B cell (primary cell): ENCODE measurements at regions of chr16 and their contacts with region 1.

Region 1: DNA sequence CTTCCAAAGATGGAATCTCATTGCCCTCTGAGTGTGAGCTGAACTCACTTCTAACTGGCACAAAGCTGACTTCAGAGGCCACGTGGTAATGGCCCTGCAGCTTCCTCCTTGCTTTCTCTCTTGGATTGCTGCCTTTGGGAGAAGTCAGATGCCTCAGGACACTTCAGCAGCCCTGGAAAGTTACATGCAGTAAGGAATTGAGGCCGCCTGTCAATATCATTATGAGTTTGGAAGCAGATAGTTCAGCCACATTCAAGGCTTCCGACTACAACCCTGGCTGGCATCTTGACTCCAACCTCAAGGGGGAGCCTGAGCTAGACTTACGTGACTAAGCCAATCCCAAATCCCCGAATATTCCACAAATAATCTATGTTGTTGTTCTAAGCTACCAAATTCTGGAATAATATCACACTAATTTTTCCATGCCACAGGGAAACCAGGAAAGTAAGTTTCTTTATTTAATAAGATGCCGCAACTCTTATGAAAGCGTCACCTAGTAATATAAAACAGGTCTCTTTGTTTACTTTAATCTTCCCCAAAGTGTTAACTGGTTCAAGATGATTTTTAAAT is 13.6 kb downstream of the CEP20 start:
- DNase-seq: peak; percentile 37
- ATAC-seq: no peak
- H3K4me3 ChIP-seq: no peak overlapping the region
- H3K4me3 Mint-ChIP-seq: no peak overlapping the region
- H3K27ac ChIP-seq: no peak overlapping the region
- H3K27ac Mint-ChIP-seq: no peak overlapping the region
- H3K4me1 ChIP-seq: no peaks in the 10 kb centered on the region
- H3K4me1 Mint-ChIP-seq: no peaks in the 10 kb centered on the region
- H3K27me3 ChIP-seq: no peaks in the 10 kb centered on the region
- H3K27me3 Mint-ChIP-seq: no peaks in the 10 kb centered on the region
- CTCF ChIP-seq: peak; percentile 43

Region 2: DNA sequence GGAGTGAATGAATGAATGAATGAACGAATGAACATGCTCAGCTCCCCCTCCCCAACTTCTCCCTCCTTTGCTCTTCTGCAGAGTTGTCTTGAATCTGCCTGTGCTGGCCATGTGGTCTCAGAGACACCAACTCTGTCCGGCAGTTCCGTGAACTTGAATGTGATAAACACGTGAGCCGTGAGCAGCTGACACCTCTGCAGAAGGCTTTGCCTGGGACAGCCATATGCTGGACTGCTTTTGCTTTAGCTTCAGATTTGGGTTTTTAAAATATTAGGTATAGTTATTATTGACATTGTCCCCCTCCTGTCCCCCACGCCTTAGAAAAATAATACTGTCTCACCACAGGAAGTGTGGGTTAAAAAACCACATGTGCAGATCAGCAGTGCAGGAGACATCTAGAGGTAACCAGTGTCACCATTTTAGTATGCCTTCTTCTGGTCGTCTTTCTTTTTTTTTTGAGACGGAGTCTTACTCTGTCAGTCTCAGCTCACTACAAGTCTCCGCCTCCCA is 158.4 kb after region 1 on chr16:
- CTCF ChIA-PET with region 1: interaction called, 15 read pairs
- POLR2A ChIA-PET with region 1: no interaction called
- intact Hi-C with region 1: no loop called
- DNase-seq: peak; percentile 38
- ATAC-seq: peak; percentile 68
- H3K4me3 ChIP-seq: no peak overlapping the region
- H3K4me3 Mint-ChIP-seq: no peak overlapping the region
- H3K27ac ChIP-seq: peak overlapping the region in 1 of 2 donors; percentile 41
- H3K27ac Mint-ChIP-seq: peak overlapping the region; percentile 28
- H3K4me1 ChIP-seq: peaks cover 7 to 13% of the 10 kb centered on the region in 2 donors
- H3K4me1 Mint-ChIP-seq: peaks cover 17% of the 10 kb centered on the region
- H3K27me3 ChIP-seq: no peaks in the 10 kb centered on the region
- H3K27me3 Mint-ChIP-seq: no peaks in the 10 kb centered on the region
- CTCF ChIP-seq: no peak

Region 3: DNA sequence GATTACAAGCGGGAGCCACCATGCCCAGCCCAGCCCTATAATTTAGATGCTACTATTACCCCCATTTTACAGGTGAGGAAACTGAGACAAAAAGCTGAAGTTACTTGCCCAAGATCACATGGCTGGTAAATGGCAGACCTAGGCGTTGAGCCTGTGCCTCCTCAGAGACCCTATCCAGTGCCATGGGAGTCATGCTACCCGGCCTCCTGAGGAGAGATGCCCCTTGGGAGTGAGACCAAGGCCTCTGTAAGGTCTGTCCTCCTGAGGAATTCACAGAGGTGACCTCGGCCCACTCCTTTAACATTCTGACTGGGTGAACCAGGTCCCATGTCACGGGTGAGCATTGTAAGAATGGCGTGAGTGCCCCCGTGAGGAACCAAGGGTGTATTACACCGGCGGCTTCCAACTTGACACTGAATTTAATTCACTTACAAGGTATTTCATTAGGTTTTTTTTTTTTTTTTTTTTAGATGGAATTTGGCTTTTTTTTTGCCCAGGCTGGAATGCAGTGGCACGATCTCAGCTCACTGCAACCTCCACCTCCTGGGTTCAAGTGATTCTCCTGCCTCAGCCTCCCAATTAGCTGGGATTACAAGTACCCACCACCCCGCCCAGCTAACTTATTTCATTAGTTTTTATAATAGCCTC is 252.8 kb after region 1 on chr16:
- CTCF ChIA-PET with region 1: interaction called, 30 read pairs
- POLR2A ChIA-PET with region 1: no interaction called
- intact Hi-C with region 1: loop called (anchors 1 kb)
- DNase-seq: peak; percentile 75
- ATAC-seq: peak; percentile 92
- H3K4me3 ChIP-seq: no peak overlapping the region
- H3K4me3 Mint-ChIP-seq: no peak overlapping the region
- H3K27ac ChIP-seq: no peak overlapping the region
- H3K27ac Mint-ChIP-seq: peak overlapping the region; percentile 46
- H3K4me1 ChIP-seq: peaks cover 0 to 3% of the 10 kb centered on the region in 2 donors
- H3K4me1 Mint-ChIP-seq: peaks cover 3% of the 10 kb centered on the region
- H3K27me3 ChIP-seq: no peaks in the 10 kb centered on the region
- H3K27me3 Mint-ChIP-seq: no peaks in the 10 kb centered on the region
- CTCF ChIP-seq: peak; percentile 95